ENCODE measurements at regions of chr20 and their contacts with region 1.

Region 1: DNA sequence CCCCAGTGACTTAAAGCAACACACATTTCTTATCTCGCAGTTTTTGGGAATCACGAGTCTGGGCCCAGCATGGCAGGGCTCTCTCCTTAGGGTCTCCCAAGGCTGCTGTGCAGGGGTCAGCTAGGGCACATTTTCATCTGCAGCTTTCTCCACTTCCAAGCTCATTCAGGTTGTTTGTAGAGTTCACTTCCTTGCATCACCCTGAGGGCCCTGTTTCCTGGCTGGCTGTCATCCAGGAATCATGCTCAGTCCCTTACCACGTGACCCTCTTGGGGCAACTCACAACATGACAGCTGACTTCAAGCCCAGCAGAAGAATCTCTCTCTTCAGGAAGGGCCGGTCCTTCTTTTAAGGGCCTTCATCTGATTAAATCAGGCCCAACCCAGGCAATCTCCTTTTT is 21.3 kb downstream of the SNAP25 start:
- DNase-seq: peak; percentile 50
- H3K4me3 ChIP-seq: no peak overlapping the region
- H3K27ac ChIP-seq: no peak overlapping the region
- H3K4me1 ChIP-seq: no peaks in the 10 kb centered on the region
- H3K27me3 ChIP-seq: no peaks in the 10 kb centered on the region
- CTCF ChIP-seq: no peak

Region 2: GRCh38 chr20:9792674-9793073 is 447.3 kb before region 1 on chr20:
- CTCF ChIA-PET with region 1: no interaction called
- dilution Hi-C with region 1: no loop called
- in situ Hi-C with region 1: no loop called
- intact Hi-C with region 1: no loop called
- DNase-seq: no peak
- H3K4me3 ChIP-seq: no peak overlapping the region
- H3K27ac ChIP-seq: no peak overlapping the region
- H3K4me1 ChIP-seq: no peaks in the 10 kb centered on the region
- H3K27me3 ChIP-seq: no peaks in the 10 kb centered on the region
- CTCF ChIP-seq: no peak

Region 3: DNA sequence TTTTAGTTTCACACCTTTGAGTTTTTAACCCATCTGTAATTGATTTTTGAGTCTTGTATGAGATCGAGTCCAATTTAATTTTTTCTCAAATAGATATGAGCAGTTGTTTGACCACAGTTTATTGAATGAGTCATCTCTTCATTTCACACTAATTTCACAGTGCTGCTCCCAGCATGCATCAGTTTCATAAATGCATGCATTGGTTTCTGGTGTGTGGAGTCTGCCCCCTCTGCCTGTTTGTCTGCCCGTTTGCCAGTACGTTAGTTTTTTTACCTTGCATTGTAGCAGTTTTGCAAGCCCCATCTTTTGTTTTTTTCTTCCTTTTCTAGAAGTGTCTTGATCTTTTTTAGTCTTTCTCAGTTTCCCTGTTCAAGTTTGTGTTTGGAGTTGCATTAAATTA is 207.1 kb after region 1 on chr20:
- CTCF ChIA-PET with region 1: no interaction called
- dilution Hi-C with region 1: no loop called
- in situ Hi-C with region 1: no loop called
- intact Hi-C with region 1: no loop called
- DNase-seq: peak; percentile 70
- H3K4me3 ChIP-seq: no peak overlapping the region
- H3K27ac ChIP-seq: no peak overlapping the region
- H3K4me1 ChIP-seq: peaks cover 8% of the 10 kb centered on the region
- H3K27me3 ChIP-seq: no peaks in the 10 kb centered on the region
- CTCF ChIP-seq: no peak

Region 4: GRCh38 chr20:12030470-12030869 is 1790.5 kb after region 1 on chr20:
- CTCF ChIA-PET with region 1: no interaction called
- dilution Hi-C with region 1: no loop called
- in situ Hi-C with region 1: no loop called
- intact Hi-C with region 1: loop called (anchors 10 kb)
- DNase-seq: no peak
- H3K4me3 ChIP-seq: no peak overlapping the region
- H3K27ac ChIP-seq: no peak overlapping the region
- H3K4me1 ChIP-seq: no peaks in the 10 kb centered on the region
- H3K27me3 ChIP-seq: no peaks in the 10 kb centered on the region
- CTCF ChIP-seq: no peak

Measured in mammary epithelial cell (primary cell).